Posterior vena cava (tissue), 2 donors: ENCODE measurements at regions of chr19 and their contacts with region 1.

Region 1: DNA sequence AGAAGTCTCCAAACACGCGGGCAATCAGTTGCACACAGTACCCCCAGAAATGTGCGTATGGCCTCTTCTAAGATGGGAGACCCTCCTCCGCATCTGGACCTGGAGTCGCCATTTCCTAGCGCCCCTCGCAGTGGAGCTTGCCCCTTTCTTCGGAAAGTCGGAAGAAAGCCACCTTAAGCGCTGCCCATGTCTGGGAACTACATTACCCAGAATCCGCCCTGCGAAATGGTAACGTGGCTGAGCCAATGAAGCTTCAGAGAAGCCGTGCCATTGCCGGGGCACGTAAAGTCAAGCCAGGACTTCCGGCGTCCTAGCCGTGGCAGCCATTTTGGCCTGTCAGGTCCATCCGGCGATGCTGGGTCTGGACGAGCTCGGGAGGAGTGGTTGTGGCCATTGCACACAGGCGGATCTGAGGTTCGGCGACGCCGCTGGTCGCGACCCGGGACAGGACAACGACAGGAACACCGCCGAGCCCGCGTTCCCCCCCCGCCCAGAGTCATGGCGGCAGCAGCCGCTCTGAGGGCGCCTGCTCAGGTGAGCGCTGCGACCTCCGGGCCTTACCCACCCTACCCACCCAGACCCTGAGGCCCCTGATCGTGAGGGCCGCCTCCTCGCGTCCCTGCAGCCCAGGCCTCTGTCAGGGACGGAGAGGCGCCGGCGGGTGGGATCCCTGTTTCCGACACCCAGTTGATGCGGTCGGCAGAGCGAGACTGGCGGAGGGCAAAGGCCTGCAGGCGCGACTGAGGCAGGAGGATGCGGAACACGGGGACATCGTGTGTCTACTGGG is at the start of gene ZNF586:
- DNase-seq: peak; percentile 96
- total RNA-seq, gene ZNF586: 9.8 to 15.1 TPM

Region 2: GRCh38 chr19:57830071-57830602 is 60.6 kb after region 1 on chr19 and contains the start of gene ZNF587B:
- intact Hi-C with region 1: no loop called
- DNase-seq: peak; percentile 85
- total RNA-seq, gene ZNF587B: 11.8 to 13.0 TPM

Region 3: GRCh38 chr19:57992841-57993240 is 223.3 kb after region 1 on chr19:
- intact Hi-C with region 1: loop called in 1 of 2 experiments (anchors 10 kb)
- DNase-seq: no peak